Lower leg skin (tissue), 4 donors: ENCODE measurements at regions of chr3 and their contacts with region 1.

Region 1: DNA sequence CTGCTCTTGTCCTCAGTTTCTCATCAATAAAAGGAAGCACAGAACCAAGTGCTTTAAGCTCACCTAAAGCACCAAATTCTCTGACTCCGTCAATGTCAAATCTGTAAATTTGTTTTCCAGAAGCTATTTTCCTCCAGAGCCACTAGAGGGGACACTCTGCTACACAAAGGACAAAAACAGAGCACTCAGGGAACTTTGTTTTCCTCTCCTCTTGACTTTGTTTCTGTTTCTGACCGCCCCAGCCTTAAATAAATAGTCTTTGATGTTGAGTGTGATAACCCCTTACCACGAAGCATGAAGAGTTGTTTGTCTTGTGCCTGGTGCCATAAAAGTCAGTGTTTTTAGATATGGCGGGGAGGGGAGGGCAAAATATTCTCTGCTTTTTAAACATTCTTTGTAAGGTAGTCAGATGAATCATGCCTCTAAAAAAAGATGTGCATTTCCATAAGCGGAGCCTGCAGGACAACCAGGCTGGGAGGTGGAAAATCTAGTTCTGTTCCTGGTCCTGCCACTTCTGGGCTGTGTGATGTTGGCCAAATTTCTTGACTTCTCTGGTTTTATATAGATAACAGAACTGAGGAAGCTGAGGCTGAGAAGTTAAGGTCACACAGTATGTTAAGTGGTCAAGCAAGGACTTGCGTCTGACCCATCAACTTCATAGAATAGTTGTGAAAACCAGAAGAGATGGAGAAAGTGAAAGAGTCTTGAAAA is 7.3 kb upstream of the ZBTB38 start:
- DNase-seq: no peak
- H3K4me3 ChIP-seq: no peak overlapping the region
- CTCF ChIP-seq: peak in 1 of 3 donors; percentile 79
- POLR2A ChIP-seq: no peak

Region 2: GRCh38 chr3:141448606-141449220 is 87.7 kb after region 1 on chr3:
- intact Hi-C with region 1: loop called (anchors 5 kb)
- DNase-seq: no peak
- H3K4me3 ChIP-seq: no peak overlapping the region
- CTCF ChIP-seq: no peak
- POLR2A ChIP-seq: no peak